Pancreas (tissue), 10 donors: ENCODE measurements at regions of chr4 and their contacts with region 1.

Region 1: DNA sequence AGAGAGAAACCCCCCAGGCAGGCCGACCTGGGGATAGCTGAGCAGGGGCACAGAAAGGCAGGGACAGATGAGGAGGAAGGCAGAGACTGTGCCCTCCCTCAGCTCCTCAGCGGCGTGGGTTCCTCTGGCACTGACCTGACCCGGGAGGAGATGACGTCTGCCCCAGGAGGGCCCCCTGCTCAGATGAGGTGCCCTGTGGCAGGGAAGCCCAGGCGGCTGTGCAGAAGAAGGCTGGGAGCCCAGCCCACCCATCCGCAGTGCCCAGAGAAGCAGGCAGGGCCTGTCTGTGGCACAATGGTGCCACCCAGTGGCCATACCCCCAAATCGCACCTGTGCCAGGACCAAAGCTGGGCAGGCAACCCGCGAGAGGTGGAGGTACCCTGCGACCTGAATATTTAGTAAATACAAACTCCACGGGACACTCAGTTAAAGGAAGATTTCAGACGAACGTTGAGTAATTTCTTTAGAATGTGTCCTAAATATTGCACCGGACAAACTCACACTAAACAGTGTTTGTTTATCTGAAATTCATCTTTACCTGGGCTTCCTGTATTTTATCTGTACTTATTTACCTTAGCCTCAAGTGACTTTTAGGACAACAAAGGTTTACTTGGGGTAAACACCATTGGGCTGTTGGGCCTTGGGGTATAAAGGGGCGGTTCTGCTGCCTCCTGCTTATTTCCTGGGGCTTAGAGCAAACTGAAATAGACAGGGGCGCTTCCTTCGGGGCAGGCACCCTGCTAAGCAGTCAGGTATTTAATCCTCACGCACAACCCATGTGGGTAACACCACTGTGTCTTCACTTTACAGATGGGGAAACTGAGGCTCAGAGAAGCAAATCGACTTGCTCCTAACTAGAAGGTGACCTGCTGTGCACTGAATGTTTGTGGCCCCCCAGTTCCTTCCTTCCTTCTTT is 46.5 kb upstream of the HMX1 start:
- DNase-seq: peak; percentile 26 to 92 (median 76)
- ATAC-seq: peak; percentile 90 to 99 (median 94)
- H3K4me3 ChIP-seq: no peak overlapping the region
- H3K27ac ChIP-seq: no peak overlapping the region
- H3K4me1 ChIP-seq: no peaks in the 10 kb centered on the region
- H3K27me3 ChIP-seq: no peaks in the 10 kb centered on the region
- CTCF ChIP-seq: peak; percentile 81 to 90 (median 82)

Region 2: GRCh38 chr4:8607603-8608481 is 310.3 kb before region 1 on chr4:
- intact Hi-C with region 1: loop called in 2 of 3 experiments (anchors 10 kb)
- DNase-seq: peak in 4 of 6 donors; percentile 33 to 81 (median 62)
- ATAC-seq: peak in 3 of 4 donors; percentile 60 to 74 (median 63)
- H3K4me3 ChIP-seq: no peak overlapping the region
- H3K27ac ChIP-seq: no peak overlapping the region
- H3K4me1 ChIP-seq: no peaks in the 10 kb centered on the region
- H3K27me3 ChIP-seq: no peaks in the 10 kb centered on the region
- CTCF ChIP-seq: peak; percentile 88 to 96 (median 93)

Region 3: DNA sequence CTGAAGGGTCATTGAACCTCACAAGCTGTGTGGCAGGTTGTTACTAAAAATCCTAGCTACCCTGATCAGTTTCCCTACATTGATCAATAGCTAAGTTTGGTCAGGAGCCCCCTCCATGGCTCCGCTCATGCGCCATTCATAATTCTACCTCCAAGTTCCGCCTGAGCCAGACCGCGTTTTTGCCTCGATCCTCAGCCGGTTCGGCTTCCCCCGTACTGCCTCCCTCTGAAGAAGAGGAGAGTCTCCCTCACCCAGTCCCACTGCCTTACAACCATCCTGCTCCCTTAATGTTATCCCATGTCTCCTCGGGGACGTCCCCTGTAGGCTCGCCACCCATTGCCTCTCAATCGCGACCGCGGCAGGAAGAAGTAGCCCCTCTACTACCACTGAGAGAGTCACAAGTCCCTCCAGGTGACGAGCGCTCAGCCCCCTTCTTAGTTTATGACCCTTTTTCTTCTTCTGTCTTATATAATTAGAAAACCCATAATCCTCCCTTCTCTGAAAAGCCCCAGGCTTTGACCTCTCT is 684.3 kb after region 1 on chr4:
- intact Hi-C with region 1: no loop called
- DNase-seq: no peak
- ATAC-seq: no peak
- H3K4me3 ChIP-seq: no peak overlapping the region
- H3K27ac ChIP-seq: no peak overlapping the region
- H3K4me1 ChIP-seq: no peaks in the 10 kb centered on the region
- H3K27me3 ChIP-seq: no peaks in the 10 kb centered on the region
- CTCF ChIP-seq: no peak